Activated CD4-positive, alpha-beta memory T cell treated with anti-CD3 and anti-CD28 coated beads, Interleukin-2, amount 10 ng/mL, durations not matched to agents 7 days and 5 days (primary cell): ENCODE measurements at regions of chr6 and their contacts with region 1.

Region 1: GRCh38 chr6:56595490-56596122 is 47.1 kb downstream of the DST start:
- DNase-seq: peak; percentile 45
- H3K4me3 Mint-ChIP-seq: no peak overlapping the region
- H3K27ac Mint-ChIP-seq: no peak overlapping the region
- H3K4me1 Mint-ChIP-seq: peaks cover 27% of the 10 kb centered on the region
- H3K27me3 Mint-ChIP-seq: peaks cover 2% of the 10 kb centered on the region

Region 2: DNA sequence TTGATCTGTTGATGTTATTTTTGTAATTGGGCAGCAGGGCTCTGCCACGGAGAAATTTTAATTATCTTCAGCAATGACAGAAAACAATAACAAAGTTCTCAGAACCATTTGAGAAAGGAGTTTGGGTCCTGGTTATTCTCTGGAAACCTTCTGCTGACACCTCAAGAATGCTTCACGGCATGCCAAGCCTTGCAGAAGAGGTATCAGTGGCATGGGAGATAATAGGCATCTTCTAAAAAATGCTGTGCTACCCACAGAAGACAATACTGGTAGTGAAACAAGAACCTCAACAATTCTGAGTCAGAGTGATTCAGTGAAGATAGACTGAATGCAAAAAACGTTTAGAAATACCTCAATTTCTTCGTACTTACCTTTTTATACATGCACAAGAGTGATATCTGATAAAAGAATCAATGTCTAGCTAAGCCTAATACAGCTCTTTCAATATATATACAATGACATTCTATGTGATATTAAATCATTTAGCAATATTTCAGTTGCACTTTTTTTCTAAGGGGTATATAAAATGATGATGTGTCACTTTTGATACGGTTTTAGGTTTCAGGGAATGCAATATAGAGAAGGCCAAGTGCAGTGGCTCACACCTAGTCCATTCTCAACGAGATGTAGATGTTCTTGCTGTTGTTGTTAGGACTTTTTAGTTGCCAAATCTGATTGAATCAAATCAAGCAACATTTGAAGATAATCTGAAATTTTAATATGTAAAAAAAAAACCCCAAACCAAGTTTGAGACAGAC is 237.8 kb before region 1 on chr6:
- CTCF ChIA-PET with region 1: interaction called, 11 read pairs
- POLR2A ChIA-PET with region 1: no interaction called
- DNase-seq: no peak
- H3K4me3 Mint-ChIP-seq: no peak overlapping the region
- H3K27ac Mint-ChIP-seq: no peak overlapping the region
- H3K4me1 Mint-ChIP-seq: no peaks in the 10 kb centered on the region
- H3K27me3 Mint-ChIP-seq: peaks cover 3% of the 10 kb centered on the region

Region 3: GRCh38 chr6:56542364-56543331 is 53.0 kb before region 1 on chr6:
- CTCF ChIA-PET with region 1: interaction called, 18 read pairs
- POLR2A ChIA-PET with region 1: interaction called, 3 read pairs
- DNase-seq: peak; percentile 71
- H3K4me3 Mint-ChIP-seq: no peak overlapping the region
- H3K27ac Mint-ChIP-seq: no peak overlapping the region
- H3K4me1 Mint-ChIP-seq: no peaks in the 10 kb centered on the region
- H3K27me3 Mint-ChIP-seq: no peaks in the 10 kb centered on the region

Region 4: GRCh38 chr6:56570413-56571359 is 24.9 kb before region 1 on chr6:
- CTCF ChIA-PET with region 1: interaction called, 23 read pairs
- POLR2A ChIA-PET with region 1: no interaction called
- DNase-seq: no peak
- H3K4me3 Mint-ChIP-seq: no peak overlapping the region
- H3K27ac Mint-ChIP-seq: no peak overlapping the region
- H3K4me1 Mint-ChIP-seq: no peaks in the 10 kb centered on the region
- H3K27me3 Mint-ChIP-seq: no peaks in the 10 kb centered on the region

Region 5: DNA sequence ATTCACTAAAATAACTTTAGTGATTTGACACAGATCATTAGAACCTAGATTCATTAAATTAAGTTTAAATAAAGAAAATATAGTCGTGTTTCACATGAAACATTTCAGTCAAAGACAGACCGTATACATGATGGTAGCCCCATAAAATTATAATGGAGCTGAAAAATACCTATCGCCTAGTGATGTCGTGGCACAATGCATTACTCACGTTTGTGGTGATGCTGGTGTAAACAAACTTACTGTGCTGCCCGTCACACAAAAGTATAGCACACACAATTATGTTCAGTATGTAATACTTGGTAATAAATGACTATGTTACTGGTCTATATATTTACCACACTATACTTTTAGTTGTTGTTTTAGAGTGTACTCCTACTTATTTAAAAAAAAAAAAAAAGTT is 29.8 kb after region 1 on chr6:
- CTCF ChIA-PET with region 1: interaction called, 10 read pairs
- POLR2A ChIA-PET with region 1: no interaction called
- DNase-seq: no peak
- H3K4me3 Mint-ChIP-seq: no peak overlapping the region
- H3K27ac Mint-ChIP-seq: no peak overlapping the region
- H3K4me1 Mint-ChIP-seq: no peaks in the 10 kb centered on the region
- H3K27me3 Mint-ChIP-seq: peaks cover 2% of the 10 kb centered on the region

Region 6: GRCh38 chr6:56851541-56852259 is 256.1 kb after region 1 on chr6:
- CTCF ChIA-PET with region 1: interaction called, 11 read pairs
- POLR2A ChIA-PET with region 1: no interaction called
- DNase-seq: peak; percentile 70
- H3K4me3 Mint-ChIP-seq: peak overlapping the region; percentile 71
- H3K27ac Mint-ChIP-seq: peak overlapping the region; percentile 63
- H3K4me1 Mint-ChIP-seq: peaks cover 23% of the 10 kb centered on the region
- H3K27me3 Mint-ChIP-seq: peaks cover 27% of the 10 kb centered on the region